CD8-positive, alpha-beta memory T cell (primary cell): ENCODE measurements at regions of chr16 and their contacts with region 1.

Region 1: DNA sequence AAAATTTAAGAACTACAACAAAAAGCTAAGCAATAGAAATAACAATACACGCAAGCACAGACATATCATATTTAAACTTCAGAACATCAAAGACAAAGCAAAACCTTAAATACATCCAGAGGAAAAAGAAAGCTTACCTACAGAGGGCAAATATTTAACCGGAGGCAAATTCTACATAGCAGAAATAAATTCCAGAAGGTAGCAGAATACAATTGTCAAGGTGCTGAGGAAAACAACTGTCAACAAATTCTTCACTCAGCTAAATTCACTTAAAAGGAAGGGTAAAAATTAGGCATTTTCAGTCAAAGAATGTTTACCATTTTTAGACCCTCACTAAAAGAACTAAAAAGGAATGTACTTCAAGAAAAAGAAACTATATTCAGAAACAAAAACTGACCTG is 84.8 kb downstream of the DYNLRB2 start:
- DNase-seq: no peak
- H3K4me3 ChIP-seq: no peak overlapping the region
- H3K4me3 Mint-ChIP-seq: no peak overlapping the region
- H3K27ac ChIP-seq: no peak overlapping the region
- H3K27ac Mint-ChIP-seq: no peak overlapping the region
- H3K4me1 ChIP-seq: no peaks in the 10 kb centered on the region
- H3K4me1 Mint-ChIP-seq: peaks cover 0 to 9% (median 0%) of the 10 kb centered on the region in 3 donors
- H3K27me3 ChIP-seq: no peaks in the 10 kb centered on the region
- H3K27me3 Mint-ChIP-seq: no peaks in the 10 kb centered on the region

Region 2: DNA sequence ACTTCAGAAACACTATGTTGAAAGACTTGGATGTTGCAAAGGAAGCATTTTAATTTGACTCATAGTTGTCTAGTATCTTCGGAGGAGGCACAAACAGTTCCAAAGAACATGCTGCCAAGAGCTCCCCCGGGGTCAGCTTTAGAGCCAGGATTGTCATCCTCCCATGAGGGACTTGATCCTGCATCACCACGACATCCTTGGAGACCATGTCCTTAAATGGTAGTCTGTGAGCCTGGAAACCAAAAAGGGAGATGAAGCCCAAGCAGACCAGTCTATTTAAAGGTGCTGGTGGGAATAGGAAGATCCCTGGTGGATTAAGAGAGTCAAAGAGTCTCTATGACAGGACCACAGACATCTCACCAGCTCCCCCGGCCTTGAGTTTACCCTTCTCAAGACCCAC is 118.1 kb before region 1 on chr16:
- CTCF ChIA-PET with region 1: no interaction called
- POLR2A ChIA-PET with region 1: no interaction called
- DNase-seq: no peak
- H3K4me3 ChIP-seq: no peak overlapping the region
- H3K4me3 Mint-ChIP-seq: no peak overlapping the region
- H3K27ac ChIP-seq: no peak overlapping the region
- H3K27ac Mint-ChIP-seq: peak overlapping the region in 1 of 8 donors; percentile 30
- H3K4me1 ChIP-seq: no peaks in the 10 kb centered on the region
- H3K4me1 Mint-ChIP-seq: no peaks in the 10 kb centered on the region
- H3K27me3 ChIP-seq: no peaks in the 10 kb centered on the region
- H3K27me3 Mint-ChIP-seq: peaks cover 11 to 43% of the 10 kb centered on the region in 2 donors

Region 3: GRCh38 chr16:80723091-80723490 is 97.5 kb after region 1 on chr16:
- CTCF ChIA-PET with region 1: no interaction called
- POLR2A ChIA-PET with region 1: interaction called, 10 read pairs
- DNase-seq: no peak
- H3K4me3 ChIP-seq: no peak overlapping the region
- H3K4me3 Mint-ChIP-seq: no peak overlapping the region
- H3K27ac ChIP-seq: no peak overlapping the region
- H3K27ac Mint-ChIP-seq: no peak overlapping the region
- H3K4me1 ChIP-seq: peaks cover 18% of the 10 kb centered on the region
- H3K4me1 Mint-ChIP-seq: peaks cover 47 to 76% (median 56%) of the 10 kb centered on the region in 3 donors
- H3K27me3 ChIP-seq: no peaks in the 10 kb centered on the region
- H3K27me3 Mint-ChIP-seq: no peaks in the 10 kb centered on the region